GM12878 (cell line): ENCODE measurements at regions of chr6 and their contacts with region 1.

Region 1: GRCh38 chr6:149423964-149424440 is 23.9 kb downstream of the SUMO4 start:
- DNase-seq: no peak
- ATAC-seq: no peak
- H3K4me3 ChIP-seq: no peak overlapping the region
- H3K27ac ChIP-seq: no peak overlapping the region
- H3K4me1 ChIP-seq: peaks cover 11% of the 10 kb centered on the region
- H3K27me3 ChIP-seq: no peaks in the 10 kb centered on the region; a peak in 1 of 4 replicates
- CTCF ChIP-seq: no peak
- EP300 ChIP-seq: no peak
- POLR2A ChIP-seq: no peak
- RAD21 ChIP-seq: no peak

Region 2: DNA sequence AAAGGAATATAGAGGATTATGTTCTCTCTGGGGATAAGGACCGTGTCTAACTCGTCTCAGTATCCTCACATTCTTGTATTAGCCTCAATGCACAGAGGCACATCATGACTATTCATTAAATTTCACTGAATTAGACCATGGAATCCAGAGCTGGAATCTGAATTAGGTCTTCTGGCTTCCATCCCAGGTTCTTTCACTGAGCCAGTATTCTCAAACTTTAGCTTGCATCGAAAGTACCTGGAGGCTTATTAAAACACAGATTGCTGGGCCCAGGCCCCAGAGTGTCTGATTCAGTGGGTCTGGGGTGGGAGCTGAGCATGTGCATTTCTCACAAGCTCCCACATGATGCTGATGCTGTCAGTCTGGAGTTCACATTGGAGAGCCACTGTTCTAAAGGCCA is 535.1 kb before region 1 on chr6:
- CTCF ChIA-PET with region 1: no interaction called
- POLR2A ChIA-PET with region 1: no interaction called
- RAD21 ChIA-PET with region 1: no interaction called
- SMC1A ChIA-PET with region 1: no interaction called
- in situ Hi-C with region 1: no loop called
- intact Hi-C with region 1: no loop called
- DNase-seq: no peak
- ATAC-seq: no peak
- H3K4me3 ChIP-seq: no peak overlapping the region
- H3K27ac ChIP-seq: no peak overlapping the region
- H3K4me1 ChIP-seq: no peaks in the 10 kb centered on the region
- H3K27me3 ChIP-seq: no peaks in the 10 kb centered on the region; a peak in 1 of 4 replicates
- CTCF ChIP-seq: no peak
- EP300 ChIP-seq: no peak
- POLR2A ChIP-seq: no peak
- RAD21 ChIP-seq: no peak

Region 3: GRCh38 chr6:149118737-149119653 is 305.0 kb before region 1 on chr6:
- CTCF ChIA-PET with region 1: no interaction called
- POLR2A ChIA-PET with region 1: no interaction called
- RAD21 ChIA-PET with region 1: no interaction called
- SMC1A ChIA-PET with region 1: no interaction called
- in situ Hi-C with region 1: no loop called
- intact Hi-C with region 1: no loop called
- DNase-seq: no peak
- ATAC-seq: no peak
- H3K4me3 ChIP-seq: no peak overlapping the region
- H3K27ac ChIP-seq: no peak overlapping the region
- H3K4me1 ChIP-seq: no peaks in the 10 kb centered on the region
- H3K27me3 ChIP-seq: no peaks in the 10 kb centered on the region
- CTCF ChIP-seq: no peak
- EP300 ChIP-seq: no peak
- POLR2A ChIP-seq: no peak
- RAD21 ChIP-seq: no peak

Region 4: DNA sequence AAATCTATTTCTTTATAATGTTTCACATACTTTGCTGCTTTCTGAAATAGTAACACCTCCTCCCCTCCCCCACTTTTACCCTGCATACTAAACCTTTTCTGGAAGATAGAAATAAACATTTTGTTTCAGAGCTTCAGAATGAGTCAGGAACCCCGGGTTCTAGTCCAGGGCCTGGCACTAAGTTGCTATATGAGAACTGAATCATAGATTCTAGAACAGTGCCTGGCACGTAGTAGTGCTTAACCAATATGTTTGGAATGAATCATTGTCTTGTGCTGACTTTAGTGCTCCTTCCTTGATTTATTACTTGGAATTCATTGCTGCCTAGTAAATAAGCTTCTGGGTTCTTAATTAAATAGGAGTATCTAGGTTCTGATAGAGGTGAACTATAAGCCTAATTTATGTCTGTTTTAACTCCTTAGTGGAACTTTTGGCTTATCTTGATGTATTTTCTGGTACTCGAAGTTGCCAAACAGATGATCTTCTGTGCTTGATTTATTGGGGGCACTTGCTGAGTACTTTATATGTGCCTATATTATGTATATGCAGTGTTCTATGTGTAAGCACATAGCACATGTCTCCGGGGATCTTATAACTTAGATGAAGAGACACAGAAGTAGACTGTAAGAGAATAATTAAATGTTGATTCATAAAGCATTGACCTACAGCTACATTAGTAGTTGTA is 87.9 kb before region 1 on chr6:
- CTCF ChIA-PET with region 1: interaction called, 3 read pairs
- POLR2A ChIA-PET with region 1: no interaction called
- RAD21 ChIA-PET with region 1: interaction called, 5 read pairs
- SMC1A ChIA-PET with region 1: interaction called, 11 read pairs
- in situ Hi-C with region 1: no loop called
- intact Hi-C with region 1: no loop called
- DNase-seq: no peak
- ATAC-seq: peak; percentile 50
- H3K4me3 ChIP-seq: peak overlapping the region; percentile 32; the same call in 1 of the 2 replicates
- H3K27ac ChIP-seq: peak overlapping the region; percentile 73
- H3K4me1 ChIP-seq: peaks cover 36% of the 10 kb centered on the region
- H3K27me3 ChIP-seq: no peaks in the 10 kb centered on the region
- CTCF ChIP-seq: no peak
- EP300 ChIP-seq: no peak
- POLR2A ChIP-seq: no peak
- RAD21 ChIP-seq: no peak

Region 5: DNA sequence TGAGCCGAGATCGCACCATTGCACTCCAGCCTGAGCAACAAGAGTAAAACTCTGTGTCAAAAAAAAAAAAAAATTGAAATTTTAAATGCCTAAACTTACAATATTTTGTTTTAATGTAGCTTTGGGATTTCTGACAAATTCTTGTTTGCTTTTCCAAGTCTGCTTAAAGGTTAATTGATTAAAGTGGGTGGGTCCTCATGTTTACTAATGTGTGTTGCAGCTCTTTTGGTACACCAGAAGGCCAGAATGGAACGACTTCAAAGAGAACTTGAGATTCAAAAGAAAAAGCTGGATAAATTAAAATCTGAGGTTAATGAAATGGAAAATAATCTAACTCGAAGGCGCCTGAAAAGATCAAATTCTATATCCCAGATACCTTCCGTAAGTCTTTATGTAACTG is 26.6 kb before region 1 on chr6:
- CTCF ChIA-PET with region 1: interaction called, 11 read pairs
- POLR2A ChIA-PET with region 1: interaction called, 6 read pairs
- RAD21 ChIA-PET with region 1: interaction called, 6 read pairs
- SMC1A ChIA-PET with region 1: interaction called, 10 read pairs
- in situ Hi-C with region 1: no loop called
- intact Hi-C with region 1: no loop called
- DNase-seq: no peak
- ATAC-seq: no peak
- H3K4me3 ChIP-seq: no peak overlapping the region
- H3K27ac ChIP-seq: no peak overlapping the region
- H3K4me1 ChIP-seq: no peaks in the 10 kb centered on the region
- H3K27me3 ChIP-seq: no peaks in the 10 kb centered on the region
- CTCF ChIP-seq: no peak
- EP300 ChIP-seq: no peak
- POLR2A ChIP-seq: no peak
- RAD21 ChIP-seq: no peak